ENCODE measurements at regions of chr5 and their contacts with region 1.

Region 1: GRCh38 chr5:87412630-87413342 is at the start of gene CCNH:
- DNase-seq: peak; percentile 97
- H3K4me3 Mint-ChIP-seq: peak within 1 kb of the TSS; percentile 91
- H3K27ac Mint-ChIP-seq: peak within 1 kb of the TSS; percentile 94
- H3K4me1 Mint-ChIP-seq: peaks cover 37% of the 10 kb centered on the region
- H3K27me3 Mint-ChIP-seq: no peaks in the 10 kb centered on the region
- total RNA-seq, gene CCNH: 65.8 to 72.7 TPM

Region 2: DNA sequence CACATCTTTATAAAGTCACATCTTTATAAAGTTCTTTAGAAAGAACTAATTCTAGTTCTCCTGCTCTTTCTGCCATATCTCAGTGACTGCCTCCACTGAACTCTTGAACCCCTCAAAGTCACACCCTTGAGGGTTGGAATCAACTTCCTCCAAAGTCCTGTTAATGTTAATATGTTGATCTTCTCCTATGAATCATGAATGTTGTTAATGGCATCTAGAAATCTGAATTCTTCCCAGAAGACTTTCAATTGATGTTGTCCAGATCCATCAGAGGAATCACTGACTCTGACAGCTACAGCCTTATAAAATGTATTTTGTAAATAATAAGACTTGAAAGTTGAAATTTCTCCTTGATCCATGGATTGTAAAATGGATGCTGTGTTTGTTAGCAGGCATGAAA is 581.7 kb before region 1 on chr5:
- CTCF ChIA-PET with region 1: no interaction called
- POLR2A ChIA-PET with region 1: no interaction called
- intact Hi-C with region 1: no loop called
- DNase-seq: no peak
- H3K4me3 Mint-ChIP-seq: no peak overlapping the region
- H3K27ac Mint-ChIP-seq: no peak overlapping the region
- H3K4me1 Mint-ChIP-seq: no peaks in the 10 kb centered on the region
- H3K27me3 Mint-ChIP-seq: no peaks in the 10 kb centered on the region

Region 3: DNA sequence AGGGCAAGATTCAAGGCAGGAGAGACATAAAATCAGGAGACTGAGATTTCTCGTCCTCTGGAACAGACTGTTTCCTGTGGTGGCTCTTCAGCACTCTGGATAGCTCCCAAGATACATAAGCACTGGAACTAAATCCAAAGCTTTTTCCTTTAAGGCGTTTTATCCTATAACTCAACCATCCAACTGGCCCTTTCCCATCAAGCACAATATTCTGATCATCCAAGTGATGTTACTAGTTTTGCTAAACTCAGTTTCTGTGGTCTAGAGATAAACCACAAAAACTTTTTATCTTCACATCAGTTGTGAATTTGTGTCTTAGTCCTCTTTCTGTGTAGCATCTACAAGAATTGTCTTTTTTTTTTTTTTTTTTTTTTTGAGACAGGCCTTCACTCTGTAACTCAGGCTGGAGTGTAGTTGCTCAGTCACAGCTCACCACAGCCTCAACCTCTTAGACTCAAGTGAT is 495.6 kb before region 1 on chr5:
- CTCF ChIA-PET with region 1: no interaction called
- POLR2A ChIA-PET with region 1: no interaction called
- intact Hi-C with region 1: loop called (anchors 5 kb)
- DNase-seq: peak; percentile 18
- H3K4me3 Mint-ChIP-seq: no peak overlapping the region
- H3K27ac Mint-ChIP-seq: no peak overlapping the region
- H3K4me1 Mint-ChIP-seq: peaks cover 13% of the 10 kb centered on the region
- H3K27me3 Mint-ChIP-seq: peaks cover 4% of the 10 kb centered on the region

Region 4: DNA sequence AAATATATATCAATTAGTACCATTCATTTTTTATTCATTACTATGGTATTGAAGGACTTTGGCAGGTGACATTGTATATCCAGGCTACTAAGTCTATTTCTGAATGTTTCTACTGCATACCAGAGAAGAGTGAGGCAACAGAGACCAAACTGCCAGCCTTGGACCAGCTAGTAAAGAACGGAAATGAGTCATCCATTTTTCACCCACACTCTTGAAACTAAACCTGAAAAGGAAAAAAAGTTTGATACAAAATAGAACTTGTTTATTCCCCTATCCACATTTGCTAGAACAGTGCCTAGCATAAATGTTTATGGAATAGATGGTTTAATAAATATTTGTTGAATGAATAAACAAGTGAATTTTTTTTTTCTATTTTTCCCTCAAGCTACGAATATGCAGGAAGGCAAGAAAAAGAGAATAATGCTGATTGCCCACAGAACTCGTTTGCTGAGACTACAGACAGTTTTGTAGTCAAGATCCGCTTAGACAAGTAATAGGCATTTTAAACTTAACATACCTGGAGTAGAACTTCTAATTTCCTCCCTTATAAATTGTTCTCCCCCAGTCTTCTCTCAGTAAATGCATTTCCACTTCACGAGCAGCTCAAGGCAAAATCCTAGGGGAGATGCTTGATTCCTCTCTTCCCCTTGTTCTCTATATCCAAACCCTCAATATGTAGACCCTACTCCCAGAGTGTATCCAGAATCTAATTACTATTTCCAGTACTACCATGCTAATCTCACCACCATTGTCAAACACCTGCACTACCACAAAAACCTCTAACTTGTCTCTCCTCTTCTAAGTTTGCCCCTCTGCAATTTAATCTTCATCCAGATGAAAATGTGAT is 291.3 kb before region 1 on chr5:
- CTCF ChIA-PET with region 1: interaction called, 3 read pairs
- POLR2A ChIA-PET with region 1: no interaction called
- intact Hi-C with region 1: loop called (anchors 1 kb)
- DNase-seq: peak; percentile 56
- H3K4me3 Mint-ChIP-seq: peak overlapping the region; percentile 11
- H3K27ac Mint-ChIP-seq: peak overlapping the region; percentile 79
- H3K4me1 Mint-ChIP-seq: peaks cover 55% of the 10 kb centered on the region
- H3K27me3 Mint-ChIP-seq: no peaks in the 10 kb centered on the region

Region 5: GRCh38 chr5:87282269-87282668 is 130.5 kb before region 1 on chr5:
- CTCF ChIA-PET with region 1: no interaction called
- POLR2A ChIA-PET with region 1: no interaction called
- intact Hi-C with region 1: loop called (anchors 5 kb)
- DNase-seq: no peak
- H3K4me3 Mint-ChIP-seq: peak overlapping the region; percentile 70
- H3K27ac Mint-ChIP-seq: peak overlapping the region; percentile 89
- H3K4me1 Mint-ChIP-seq: peaks cover 48% of the 10 kb centered on the region
- H3K27me3 Mint-ChIP-seq: no peaks in the 10 kb centered on the region

Region 6: DNA sequence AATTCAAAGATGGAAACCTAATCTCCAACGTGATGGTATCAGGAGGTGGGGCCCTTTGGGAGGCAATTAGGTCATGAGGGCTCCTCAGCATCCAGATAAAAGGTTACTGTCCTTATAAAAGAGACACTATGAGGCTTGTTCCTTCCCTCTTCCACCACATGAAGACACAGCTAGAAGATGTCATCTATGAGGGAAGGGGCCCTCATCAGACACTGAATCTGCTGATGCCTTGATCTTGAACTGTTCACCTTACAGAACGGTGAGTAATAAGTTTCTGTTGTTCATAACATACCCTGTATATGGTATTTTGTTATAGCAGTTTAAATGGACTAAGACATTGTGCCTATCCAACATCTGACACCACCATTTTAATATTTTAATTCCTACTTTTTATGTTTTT is 19.7 kb after region 1 on chr5:
- CTCF ChIA-PET with region 1: no interaction called
- POLR2A ChIA-PET with region 1: no interaction called
- intact Hi-C with region 1: loop called (anchors 1 kb)
- DNase-seq: no peak
- H3K4me3 Mint-ChIP-seq: no peak overlapping the region
- H3K27ac Mint-ChIP-seq: no peak overlapping the region
- H3K4me1 Mint-ChIP-seq: peaks cover 3% of the 10 kb centered on the region
- H3K27me3 Mint-ChIP-seq: peaks cover 7% of the 10 kb centered on the region

Region 7: DNA sequence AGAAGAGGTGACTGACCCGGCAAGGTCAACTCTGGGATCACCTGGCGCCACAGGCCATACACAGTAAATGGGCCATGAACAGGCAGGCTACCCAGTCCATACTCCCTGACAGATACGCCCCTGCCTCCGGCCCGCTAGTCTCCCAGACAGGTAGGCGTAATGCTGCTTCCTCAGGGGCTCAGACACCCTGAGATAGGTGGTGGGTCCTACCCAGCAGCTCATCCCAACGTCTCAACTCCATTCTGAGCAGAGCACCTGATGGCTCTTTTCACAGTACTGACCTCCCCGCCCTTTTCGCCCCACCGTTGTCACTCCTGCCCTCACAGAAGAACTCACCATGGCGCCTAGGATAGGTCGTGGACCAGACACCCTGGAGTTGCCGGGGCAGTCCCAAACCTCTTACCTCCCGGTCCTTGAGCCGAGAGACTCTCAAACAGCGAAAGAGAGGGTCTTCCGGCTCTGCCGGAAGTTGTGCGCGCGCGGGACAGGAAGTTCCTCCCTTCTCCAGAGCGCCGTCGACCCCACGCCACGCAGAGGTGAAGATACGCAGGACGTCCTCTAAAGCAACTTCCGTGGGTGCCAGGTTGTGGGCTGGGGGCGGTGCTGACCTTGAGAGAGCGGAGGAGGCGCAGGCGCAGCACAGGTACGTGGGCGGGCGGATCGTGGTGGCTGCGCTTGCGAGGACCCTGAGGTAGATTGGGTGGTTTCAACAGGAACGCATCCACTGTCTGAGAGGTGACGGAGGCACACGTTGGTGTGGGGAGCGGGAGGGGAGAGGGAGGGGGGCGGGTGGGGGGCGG is 855.8 kb after region 1 on chr5 and contains the start of gene TMEM161B:
- CTCF ChIA-PET with region 1: no interaction called
- POLR2A ChIA-PET with region 1: no interaction called
- intact Hi-C with region 1: loop called (anchors 1 kb)
- DNase-seq: peak; percentile 95
- H3K4me3 Mint-ChIP-seq: peak within 1 kb of the TSS; percentile 97
- H3K27ac Mint-ChIP-seq: peak within 1 kb of the TSS; percentile 94
- H3K4me1 Mint-ChIP-seq: peaks cover 45% of the 10 kb centered on the region
- H3K27me3 Mint-ChIP-seq: no peaks in the 10 kb centered on the region
- total RNA-seq, gene TMEM161B: 21.2 to 22.9 TPM

Region 8: GRCh38 chr5:88690409-88691229 is 1277.8 kb after region 1 on chr5:
- CTCF ChIA-PET with region 1: no interaction called
- POLR2A ChIA-PET with region 1: no interaction called
- intact Hi-C with region 1: loop called (anchors 5 kb)
- DNase-seq: peak; percentile 73
- H3K4me3 Mint-ChIP-seq: peak overlapping the region; percentile 68
- H3K27ac Mint-ChIP-seq: peak overlapping the region; percentile 74
- H3K4me1 Mint-ChIP-seq: peaks cover 25% of the 10 kb centered on the region
- H3K27me3 Mint-ChIP-seq: peaks cover 84% of the 10 kb centered on the region